ENCODE measurements at regions of chr11 and their contacts with region 1.

Region 1: DNA sequence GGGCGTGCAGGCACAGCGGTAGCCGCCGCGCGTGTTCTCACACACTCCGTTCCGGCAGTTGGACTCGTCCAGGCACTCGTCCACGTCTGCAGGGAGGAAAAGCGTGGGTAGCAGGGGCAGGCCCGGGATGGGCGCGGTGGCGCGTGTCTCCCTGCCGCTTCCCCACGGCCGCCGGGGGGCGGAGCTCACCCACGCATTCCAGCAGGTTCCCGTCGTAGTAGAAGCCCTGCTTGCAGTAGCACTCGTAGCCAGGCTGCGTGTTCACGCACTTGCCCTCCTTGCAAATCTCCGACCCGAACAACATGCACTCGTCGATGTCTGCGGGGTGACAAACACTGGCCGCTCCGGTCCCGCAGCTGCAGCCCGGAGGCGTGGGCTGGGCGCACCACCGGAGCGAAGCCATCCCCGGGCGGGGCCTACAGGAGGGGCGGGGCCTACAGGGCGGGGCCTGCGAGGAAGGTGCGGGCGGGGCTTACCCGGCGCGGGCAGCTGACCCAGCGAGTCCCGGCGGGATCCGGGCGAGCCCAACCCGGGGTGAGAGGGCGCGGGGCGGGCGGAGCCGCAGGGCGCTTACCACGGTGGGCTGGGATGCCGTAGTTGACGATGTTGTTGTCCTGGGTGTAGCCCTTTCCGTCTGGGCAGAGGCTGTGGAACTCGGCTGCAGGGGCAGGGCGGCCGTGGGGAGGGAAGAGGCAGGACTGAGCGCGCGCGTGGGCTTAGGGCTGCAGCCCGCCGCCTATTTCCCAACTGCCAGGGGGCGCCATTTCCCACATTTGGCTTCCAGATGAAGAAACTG is 15.6 kb downstream of the SCYL1 start:
- DNase-seq: peak; percentile 97
- H3K4me3 ChIP-seq: peak overlapping the region; percentile 19 to 48 (median 41)
- H3K27ac ChIP-seq: peak overlapping the region; percentile 86 to 97 (median 92)
- H3K4me1 ChIP-seq: peaks cover 14 to 20% (median 16%) of the 10 kb centered on the region in 4 donors
- H3K27me3 ChIP-seq: no peaks in the 10 kb centered on the region
- CTCF ChIP-seq: peak; percentile 81 to 98 (median 90)
- EP300 ChIP-seq: no peak
- POLR2A ChIP-seq: no peak

Region 2: GRCh38 chr11:64688534-64688982 is 851.9 kb before region 1 on chr11:
- in situ Hi-C with region 1: no loop called
- intact Hi-C with region 1: loop called (anchors 5 kb)
- DNase-seq: peak; percentile 89
- H3K4me3 ChIP-seq: peak overlapping the region in 3 of 4 donors; percentile 11 to 50 (median 30)
- H3K27ac ChIP-seq: peak overlapping the region; percentile 46 to 77 (median 57)
- H3K4me1 ChIP-seq: peaks cover 0 to 16% (median 8%) of the 10 kb centered on the region in 4 donors
- H3K27me3 ChIP-seq: peaks cover 15% of the 10 kb centered on the region
- CTCF ChIP-seq: peak; percentile 87 to 95 (median 94)
- EP300 ChIP-seq: no peak
- POLR2A ChIP-seq: no peak

Region 3: DNA sequence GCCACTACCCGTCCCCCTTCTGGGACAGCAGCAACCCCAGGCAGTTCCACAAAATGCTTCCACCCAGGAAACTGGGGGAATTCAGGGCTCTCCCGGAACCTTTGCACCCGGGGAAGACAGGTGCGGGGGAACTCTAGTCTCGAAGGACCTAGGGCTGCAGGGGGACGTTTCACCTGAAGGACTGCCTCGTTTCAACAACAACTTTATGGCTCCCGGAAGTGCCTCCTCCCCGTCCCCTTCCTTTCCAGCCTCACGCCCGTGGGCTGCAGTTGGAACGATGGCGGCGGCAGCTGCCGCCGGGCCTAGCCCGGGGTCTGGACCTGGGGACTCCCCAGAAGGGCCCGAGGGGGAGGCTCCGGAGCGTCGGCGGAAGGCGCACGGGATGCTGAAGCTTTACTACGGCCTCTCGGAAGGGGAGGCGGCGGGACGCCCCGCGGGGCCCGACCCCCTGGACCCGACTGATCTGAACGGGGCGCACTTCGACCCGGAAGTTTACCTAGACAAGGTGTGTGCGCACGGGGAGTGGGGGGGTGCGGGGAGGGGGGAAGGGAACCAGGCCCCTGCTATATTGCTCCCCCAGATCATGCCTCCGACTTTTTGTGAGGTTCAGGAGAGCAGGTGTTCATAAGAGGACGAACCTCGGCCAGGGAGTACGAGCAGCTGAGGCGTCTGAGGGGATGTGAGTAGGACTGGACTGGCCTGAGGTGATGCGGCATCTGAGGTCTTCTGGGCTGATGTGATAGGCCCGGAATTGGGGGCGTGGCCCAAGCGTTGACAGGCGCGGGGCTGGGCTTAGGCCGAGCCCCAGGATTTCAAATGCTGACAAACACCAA is 444.3 kb before region 1 on chr11 and contains the start of gene VPS51:
- in situ Hi-C with region 1: no loop called
- intact Hi-C with region 1: no loop called
- DNase-seq: peak; percentile 92
- H3K4me3 ChIP-seq: peak within 1 kb of the TSS; percentile 71 to 86 (median 79)
- H3K27ac ChIP-seq: peak within 1 kb of the TSS; percentile 90 to 95 (median 94)
- H3K4me1 ChIP-seq: peaks cover 8 to 17% (median 14%) of the 10 kb centered on the region in 4 donors
- H3K27me3 ChIP-seq: no peaks in the 10 kb centered on the region
- CTCF ChIP-seq: peak in 1 of 5 experiments; percentile 20
- EP300 ChIP-seq: no peak
- POLR2A ChIP-seq: peak; percentile 82
- total RNA-seq, gene VPS51: 252 to 560 (median 437) TPM

Region 4: GRCh38 chr11:65354265-65355012 is 186.1 kb before region 1 on chr11 and contains the start of gene TIGD3:
- in situ Hi-C with region 1: no loop called
- intact Hi-C with region 1: no loop called
- DNase-seq: peak; percentile 99
- H3K4me3 ChIP-seq: peak within 1 kb of the TSS; percentile 61 to 88 (median 79)
- H3K27ac ChIP-seq: peak within 1 kb of the TSS; percentile 70 to 86 (median 84)
- H3K4me1 ChIP-seq: peaks cover 11 to 25% (median 23%) of the 10 kb centered on the region in 4 donors
- H3K27me3 ChIP-seq: peaks cover 15% of the 10 kb centered on the region
- CTCF ChIP-seq: no peak
- EP300 ChIP-seq: no peak
- POLR2A ChIP-seq: no peak
- total RNA-seq, gene TIGD3: 0.48 to 3.0 (median 0.75) TPM in 3 of 4 donors, not detected in the other

Region 5: DNA sequence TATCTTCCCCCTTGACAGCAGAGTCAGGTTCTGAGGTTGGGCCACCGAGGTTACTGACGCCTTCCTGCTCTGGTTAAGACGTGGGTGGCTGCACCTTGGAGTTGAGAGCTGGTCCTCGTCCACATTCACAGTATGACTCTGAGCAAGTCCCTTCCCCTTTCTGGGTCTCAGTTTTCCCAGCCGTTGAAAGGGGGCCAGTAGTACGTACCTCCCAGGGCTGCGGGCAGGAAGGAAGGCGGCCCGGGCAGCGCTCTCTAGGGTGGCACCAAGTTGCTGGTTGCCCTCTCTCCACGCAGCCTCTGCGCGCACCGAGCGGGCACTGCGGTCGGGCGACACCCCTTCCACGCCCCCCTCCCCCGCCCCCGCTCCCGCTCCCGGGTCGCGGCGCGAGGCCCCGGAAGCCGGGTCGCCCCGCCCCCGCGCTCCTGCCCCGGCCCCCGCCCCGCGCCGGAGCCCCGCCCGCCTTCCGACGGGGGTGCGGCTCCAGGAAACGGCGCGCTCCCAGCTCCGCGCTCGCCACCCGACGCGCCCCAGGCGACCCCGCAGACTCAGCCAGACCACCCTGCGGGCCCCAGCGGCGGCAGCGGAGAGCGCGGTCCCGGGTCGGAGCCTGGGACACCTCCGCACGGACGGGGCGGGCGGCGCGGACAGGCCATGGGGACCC is 35.2 kb after region 1 on chr11 and contains the start of gene EHBP1L1:
- in situ Hi-C with region 1: no loop called
- intact Hi-C with region 1: loop called (anchors 5 kb)
- DNase-seq: peak; percentile 89
- H3K4me3 ChIP-seq: peak within 1 kb of the TSS; percentile 80 to 94 (median 86)
- H3K27ac ChIP-seq: peak within 1 kb of the TSS; percentile 96 to 98 (median 96)
- H3K4me1 ChIP-seq: peaks cover 43 to 72% (median 61%) of the 10 kb centered on the region in 4 donors
- H3K27me3 ChIP-seq: no peaks in the 10 kb centered on the region
- CTCF ChIP-seq: no peak
- EP300 ChIP-seq: no peak
- POLR2A ChIP-seq: peak; percentile 36
- total RNA-seq, gene EHBP1L1: 90.2 to 215 (median 106) TPM

Region 6: DNA sequence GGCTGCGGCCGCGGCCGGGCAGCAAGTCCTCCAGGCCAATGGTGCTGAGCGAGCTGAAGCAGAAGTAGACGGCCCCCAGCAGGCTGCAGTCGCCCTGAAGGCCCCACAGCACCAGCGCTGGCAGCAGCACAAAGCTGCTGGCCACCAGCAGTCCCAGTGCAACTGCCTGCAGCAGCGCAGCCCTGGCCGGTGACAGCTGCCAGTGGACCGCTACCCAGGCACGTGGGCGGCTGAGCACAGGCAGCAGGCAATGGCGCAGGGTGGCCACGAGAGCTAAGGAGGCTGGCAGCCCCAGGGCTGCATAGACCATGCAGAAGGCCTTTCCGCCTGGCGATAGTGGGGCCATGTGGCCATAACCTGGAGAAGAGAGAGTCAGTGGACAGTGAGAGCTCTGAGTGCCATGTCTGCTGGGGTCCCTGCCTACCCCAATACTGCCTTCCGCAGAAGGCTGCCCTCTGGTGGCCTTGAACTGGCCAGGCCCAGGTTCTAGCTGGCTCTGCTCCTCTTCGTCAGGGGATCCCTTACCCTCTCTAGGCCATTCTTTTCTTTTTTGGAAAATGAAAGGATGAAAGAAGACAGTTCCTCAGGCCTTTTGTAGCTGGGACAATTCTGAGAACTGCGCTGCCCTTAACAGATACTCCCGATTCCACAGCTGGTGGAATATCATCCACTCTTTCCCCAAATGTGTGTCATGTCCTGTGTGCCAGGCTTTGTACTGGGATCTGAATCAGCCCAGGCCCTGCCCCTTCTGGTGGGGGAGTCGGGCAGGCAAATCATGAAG is 53.2 kb after region 1 on chr11:
- in situ Hi-C with region 1: no loop called
- intact Hi-C with region 1: loop called (anchors 5 kb)
- DNase-seq: peak; percentile 49
- H3K4me3 ChIP-seq: no peak overlapping the region
- H3K27ac ChIP-seq: peak overlapping the region in 3 of 4 donors; percentile 36 to 57 (median 52)
- H3K4me1 ChIP-seq: peaks cover 0 to 28% (median 19%) of the 10 kb centered on the region in 4 donors
- H3K27me3 ChIP-seq: no peaks in the 10 kb centered on the region
- CTCF ChIP-seq: peak; percentile 64 to 73 (median 67)
- EP300 ChIP-seq: no peak
- POLR2A ChIP-seq: no peak

Region 7: GRCh38 chr11:65599955-65600246 is 59.4 kb after region 1 on chr11:
- in situ Hi-C with region 1: loop called in 1 of 4 experiments (anchors 5 kb)
- intact Hi-C with region 1: no loop called
- DNase-seq: no peak
- H3K4me3 ChIP-seq: no peak overlapping the region
- H3K27ac ChIP-seq: no peak overlapping the region
- H3K4me1 ChIP-seq: peaks cover 0 to 9% (median 9%) of the 10 kb centered on the region in 4 donors
- H3K27me3 ChIP-seq: no peaks in the 10 kb centered on the region
- CTCF ChIP-seq: no peak
- EP300 ChIP-seq: no peak
- POLR2A ChIP-seq: no peak

Measured in transverse colon (tissue), 4 donors.